B cell (primary cell): ENCODE measurements at regions of chr14 and their contacts with region 1.

Region 1: GRCh38 chr14:68685419-68686204 is 107.3 kb downstream of the ZFP36L1 start:
- DNase-seq: peak; percentile 95
- ATAC-seq: peak; percentile 81
- H3K4me3 ChIP-seq: peak overlapping the region in 2 of 5 experiments; percentile 18 to 45
- H3K4me3 Mint-ChIP-seq: peak overlapping the region; percentile 82
- H3K27ac ChIP-seq: peak overlapping the region; percentile 94 to 98
- H3K27ac Mint-ChIP-seq: peak overlapping the region; percentile 99
- H3K4me1 ChIP-seq: peaks cover 70 to 83% of the 10 kb centered on the region in 2 donors
- H3K4me1 Mint-ChIP-seq: peaks cover 90% of the 10 kb centered on the region
- H3K27me3 ChIP-seq: no peaks in the 10 kb centered on the region
- H3K27me3 Mint-ChIP-seq: no peaks in the 10 kb centered on the region
- CTCF ChIP-seq: no peak

Region 2: GRCh38 chr14:68369281-68370056 is 316.1 kb before region 1 on chr14:
- CTCF ChIA-PET with region 1: interaction called, 4 read pairs
- POLR2A ChIA-PET with region 1: interaction called, 8 read pairs
- intact Hi-C with region 1: loop called (anchors 2 kb)
- DNase-seq: peak; percentile 52
- ATAC-seq: peak; percentile 4
- H3K4me3 ChIP-seq: peak overlapping the region in 4 of 5 experiments; percentile 1 to 20 (median 14)
- H3K4me3 Mint-ChIP-seq: peak overlapping the region; percentile 73
- H3K27ac ChIP-seq: peak overlapping the region; percentile 78 to 84
- H3K27ac Mint-ChIP-seq: peak overlapping the region; percentile 97
- H3K4me1 ChIP-seq: peaks cover 78 to 92% of the 10 kb centered on the region in 2 donors
- H3K4me1 Mint-ChIP-seq: peaks cover 93% of the 10 kb centered on the region
- H3K27me3 ChIP-seq: no peaks in the 10 kb centered on the region
- H3K27me3 Mint-ChIP-seq: no peaks in the 10 kb centered on the region
- CTCF ChIP-seq: no peak

Region 3: GRCh38 chr14:68476212-68476907 is 209.3 kb before region 1 on chr14:
- CTCF ChIA-PET with region 1: interaction called, 6 read pairs
- POLR2A ChIA-PET with region 1: interaction called, 6 read pairs
- intact Hi-C with region 1: loop called (anchors 1 kb)
- DNase-seq: peak; percentile 89
- ATAC-seq: peak; percentile 90
- H3K4me3 ChIP-seq: peak overlapping the region in 1 of 5 experiments; percentile 21
- H3K4me3 Mint-ChIP-seq: peak overlapping the region; percentile 72
- H3K27ac ChIP-seq: peak overlapping the region; percentile 95 to 99
- H3K27ac Mint-ChIP-seq: peak overlapping the region; percentile 98
- H3K4me1 ChIP-seq: peaks cover 73 to 77% of the 10 kb centered on the region in 2 donors
- H3K4me1 Mint-ChIP-seq: peaks cover 84% of the 10 kb centered on the region
- H3K27me3 ChIP-seq: no peaks in the 10 kb centered on the region
- H3K27me3 Mint-ChIP-seq: no peaks in the 10 kb centered on the region
- CTCF ChIP-seq: no peak

Region 4: DNA sequence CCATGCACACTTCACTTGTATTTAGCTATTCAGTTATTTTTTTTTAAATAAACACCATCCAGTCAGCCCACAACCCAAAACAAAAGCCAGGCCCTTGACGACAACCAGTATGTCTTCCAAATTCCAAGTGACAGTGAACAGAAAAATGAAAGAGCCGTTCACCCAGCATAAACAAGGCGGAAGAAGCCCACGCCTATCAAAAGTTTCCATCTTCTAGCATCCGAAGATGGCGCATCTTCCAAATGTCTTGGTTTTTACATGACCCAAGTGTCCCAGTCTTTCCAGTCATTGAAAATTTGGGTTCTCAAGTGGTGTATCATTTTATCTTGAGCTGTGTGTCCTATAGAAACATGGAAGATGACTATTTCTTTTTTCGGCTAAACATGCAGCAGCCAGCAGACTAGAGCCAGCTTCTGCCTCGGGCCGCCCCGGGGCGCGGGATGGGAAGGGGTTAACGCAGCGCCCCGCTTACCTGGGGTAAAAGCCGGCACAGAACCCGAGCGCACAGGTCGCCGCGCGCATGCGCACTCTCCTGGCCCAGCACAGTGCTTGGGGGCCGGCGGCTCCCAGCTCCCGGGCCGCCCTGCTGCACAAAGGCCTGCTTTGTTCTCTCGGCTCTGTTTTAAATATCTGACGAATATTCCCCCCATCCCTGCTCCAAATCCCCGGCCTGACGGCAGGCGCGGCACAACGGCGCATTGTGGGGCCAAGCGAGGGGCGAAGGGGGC is 57.6 kb before region 1 on chr14:
- CTCF ChIA-PET with region 1: no interaction called
- POLR2A ChIA-PET with region 1: interaction called, 8 read pairs
- intact Hi-C with region 1: loop called (anchors 5 kb)
- DNase-seq: peak; percentile 77
- ATAC-seq: peak; percentile 74
- H3K4me3 ChIP-seq: peak overlapping the region; percentile 38 to 63 (median 44)
- H3K4me3 Mint-ChIP-seq: peak overlapping the region; percentile 86
- H3K27ac ChIP-seq: no peak overlapping the region
- H3K27ac Mint-ChIP-seq: peak overlapping the region; percentile 87
- H3K4me1 ChIP-seq: peaks cover 14 to 29% of the 10 kb centered on the region in 2 donors
- H3K4me1 Mint-ChIP-seq: peaks cover 26% of the 10 kb centered on the region
- H3K27me3 ChIP-seq: no peaks in the 10 kb centered on the region
- H3K27me3 Mint-ChIP-seq: no peaks in the 10 kb centered on the region
- CTCF ChIP-seq: no peak

Region 5: DNA sequence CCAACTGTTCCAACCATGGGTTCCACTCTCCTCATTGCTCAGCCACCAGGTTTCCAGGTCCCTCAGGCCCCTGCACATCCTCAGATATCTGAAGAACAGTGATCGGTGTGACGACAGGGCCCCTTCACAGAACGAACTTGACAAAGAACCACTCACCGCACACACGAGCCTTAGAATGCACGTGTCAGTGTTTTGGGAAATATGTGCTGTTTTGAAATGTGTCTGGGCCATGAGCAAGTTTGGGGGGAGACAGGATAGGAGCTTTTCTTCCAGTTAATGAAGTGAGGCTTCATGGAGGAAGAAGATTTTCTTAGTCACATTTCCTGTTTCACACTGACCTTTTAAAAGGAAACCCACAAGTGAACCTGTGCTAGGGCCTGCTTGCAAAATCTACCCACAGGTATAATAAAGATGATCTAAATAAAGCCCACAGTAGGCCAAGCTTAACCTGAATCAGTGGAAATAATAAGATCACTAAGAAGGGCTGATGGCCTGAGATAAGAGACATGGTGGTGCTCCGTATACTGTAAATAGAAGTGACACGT is 48.7 kb after region 1 on chr14:
- CTCF ChIA-PET with region 1: interaction called, 6 read pairs
- POLR2A ChIA-PET with region 1: interaction called, 6 read pairs
- intact Hi-C with region 1: loop called (anchors 2 kb)
- DNase-seq: peak; percentile 30
- ATAC-seq: peak; percentile 74
- H3K4me3 ChIP-seq: peak overlapping the region in 1 of 5 experiments; percentile 25
- H3K4me3 Mint-ChIP-seq: peak overlapping the region; percentile 66
- H3K27ac ChIP-seq: peak overlapping the region; percentile 8 to 64
- H3K27ac Mint-ChIP-seq: peak overlapping the region; percentile 75
- H3K4me1 ChIP-seq: peaks cover 41 to 58% of the 10 kb centered on the region in 2 donors
- H3K4me1 Mint-ChIP-seq: peaks cover 72% of the 10 kb centered on the region
- H3K27me3 ChIP-seq: no peaks in the 10 kb centered on the region
- H3K27me3 Mint-ChIP-seq: no peaks in the 10 kb centered on the region
- CTCF ChIP-seq: no peak

Region 6: DNA sequence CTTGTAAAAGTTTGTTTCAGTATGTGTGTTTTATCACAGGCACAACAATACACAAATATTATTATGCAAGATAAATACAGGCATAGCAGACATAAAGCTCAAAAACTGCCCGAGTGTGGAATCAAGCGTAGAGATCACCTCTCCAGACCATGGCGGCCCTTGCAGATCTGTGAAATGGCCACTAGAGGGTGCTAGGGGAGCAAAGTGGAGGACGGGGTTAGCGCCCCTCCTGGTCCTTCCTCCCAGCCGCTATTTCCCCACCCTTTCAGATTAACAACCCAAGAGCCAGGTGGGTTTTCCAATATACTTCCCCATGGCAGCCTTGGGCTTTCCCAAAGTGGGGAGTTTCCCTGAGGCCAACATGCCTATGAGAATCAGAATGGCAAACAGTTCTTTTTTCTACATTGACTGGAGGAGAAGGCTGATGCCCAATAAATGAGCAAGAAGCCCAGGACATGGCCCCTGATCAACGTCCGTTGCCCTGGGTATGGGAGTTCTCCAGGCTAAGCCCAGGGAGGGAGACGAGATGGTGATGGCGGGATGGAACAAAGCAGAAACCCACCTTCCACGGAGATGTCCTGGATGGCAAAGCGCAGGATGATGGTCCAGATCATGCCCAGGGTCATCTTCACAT is 226.1 kb after region 1 on chr14:
- CTCF ChIA-PET with region 1: no interaction called
- POLR2A ChIA-PET with region 1: no interaction called
- intact Hi-C with region 1: no loop called
- DNase-seq: peak; percentile 72
- ATAC-seq: peak; percentile 91
- H3K4me3 ChIP-seq: no peak overlapping the region
- H3K4me3 Mint-ChIP-seq: no peak overlapping the region
- H3K27ac ChIP-seq: no peak overlapping the region
- H3K27ac Mint-ChIP-seq: no peak overlapping the region
- H3K4me1 ChIP-seq: no peaks in the 10 kb centered on the region
- H3K4me1 Mint-ChIP-seq: peaks cover 2% of the 10 kb centered on the region
- H3K27me3 ChIP-seq: peaks cover 0 to 3% (median 0%) of the 10 kb centered on the region in 4 experiments
- H3K27me3 Mint-ChIP-seq: peaks cover 7% of the 10 kb centered on the region
- CTCF ChIP-seq: peak; percentile 84